ENCODE measurements at regions of chr1 and their contacts with region 1.

Region 1: DNA sequence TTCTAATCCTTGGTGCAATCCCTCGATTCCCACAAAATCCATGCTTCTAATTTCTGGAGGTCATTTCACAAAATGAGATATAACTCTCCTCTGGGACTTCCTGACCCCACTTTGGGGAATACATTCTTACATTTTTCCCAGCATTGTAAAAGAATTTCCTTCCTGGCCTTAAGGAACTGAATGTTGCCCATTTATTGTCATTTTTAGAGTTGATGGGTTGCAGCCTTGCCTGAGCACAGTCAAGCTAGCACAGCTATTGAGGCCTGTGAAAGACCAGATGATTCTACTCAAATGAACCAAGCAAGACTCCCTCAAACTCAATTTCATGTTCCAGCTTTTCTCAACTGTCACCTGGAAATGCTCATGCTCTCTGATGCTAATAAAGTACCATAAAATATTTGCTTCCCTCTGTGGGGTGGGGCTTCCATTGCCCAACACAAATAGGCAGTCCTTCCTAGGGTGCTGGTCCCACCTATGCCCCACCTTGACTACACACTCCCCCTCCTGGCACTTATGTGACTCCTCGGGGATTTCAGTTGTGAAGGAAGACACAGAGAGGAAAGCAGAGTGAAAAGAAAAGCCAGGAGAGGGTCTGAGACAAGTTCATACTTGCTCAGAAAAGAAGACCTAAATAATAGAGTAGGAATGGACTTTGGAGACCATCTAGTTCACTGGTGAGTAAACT is 24.0 kb upstream of the CDC7 start:
- DNase-seq: no peak
- ATAC-seq: no peak
- H3K4me3 ChIP-seq: no peak overlapping the region
- H3K27ac ChIP-seq: no peak overlapping the region
- H3K4me1 ChIP-seq: no peaks in the 10 kb centered on the region
- H3K27me3 ChIP-seq: peaks cover 2 to 6% of the 10 kb centered on the region in 2 experiments; a peak in 2 of 5 replicates
- CTCF ChIP-seq: no peak
- EP300 ChIP-seq: no peak
- POLR2A ChIP-seq: no peak
- RAD21 ChIP-seq: no peak

Region 2: DNA sequence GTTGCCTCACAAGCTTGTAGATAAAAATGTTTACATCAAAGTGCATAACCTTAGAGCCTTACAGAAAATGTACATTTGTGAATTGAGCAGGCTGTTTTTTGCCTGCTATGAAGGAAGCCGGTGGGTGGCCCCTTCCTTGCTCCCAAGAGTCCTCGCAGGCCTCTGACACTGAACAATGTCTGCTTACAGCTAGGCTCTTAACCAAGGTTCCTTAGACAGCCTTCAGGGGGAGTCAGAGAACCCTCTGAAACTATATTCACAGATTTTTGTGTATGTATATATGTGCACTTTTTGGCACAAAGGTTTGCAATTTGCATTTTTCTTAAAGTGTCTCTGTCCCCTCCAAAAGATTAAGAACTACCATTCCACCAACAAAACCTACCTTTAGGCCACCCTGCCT is 1042.2 kb before region 1 on chr1:
- CTCF ChIA-PET with region 1: no interaction called
- POLR2A ChIA-PET with region 1: no interaction called
- in situ Hi-C with region 1: loop called (anchors 10 kb)
- intact Hi-C with region 1: no loop called
- DNase-seq: peak in 2 of 4 experiments; percentile 10 to 11
- ATAC-seq: peak; percentile 81
- H3K4me3 ChIP-seq: no peak overlapping the region
- H3K27ac ChIP-seq: no peak overlapping the region
- H3K4me1 ChIP-seq: no peaks in the 10 kb centered on the region
- H3K27me3 ChIP-seq: no peaks in the 10 kb centered on the region
- CTCF ChIP-seq: peak; percentile 18 to 42 (median 19); a peak in 2 of 6 replicates
- EP300 ChIP-seq: no peak
- POLR2A ChIP-seq: no peak
- RAD21 ChIP-seq: no peak

Region 3: DNA sequence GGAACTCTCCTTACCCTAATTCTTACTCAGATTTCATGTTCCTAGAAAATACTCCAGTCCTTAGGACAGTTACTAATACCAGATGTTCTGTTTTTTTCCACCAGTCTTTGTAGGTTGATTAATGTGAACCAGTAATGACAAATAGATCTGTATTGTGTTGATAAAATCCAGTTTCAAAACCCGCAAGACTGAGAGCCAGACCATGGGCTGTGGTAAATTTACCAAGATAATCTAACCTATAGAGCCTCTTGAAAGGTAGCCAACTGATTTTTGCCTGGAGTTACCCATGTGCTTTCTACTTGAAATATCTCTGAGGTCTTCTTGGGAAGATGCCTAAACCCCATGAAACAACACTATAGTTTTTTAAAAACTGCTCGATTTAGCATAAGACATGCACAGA is 22.5 kb before region 1 on chr1:
- CTCF ChIA-PET with region 1: no interaction called
- POLR2A ChIA-PET with region 1: no interaction called
- in situ Hi-C with region 1: no loop called
- intact Hi-C with region 1: no loop called
- DNase-seq: no peak
- ATAC-seq: no peak
- H3K4me3 ChIP-seq: no peak overlapping the region
- H3K27ac ChIP-seq: no peak overlapping the region
- H3K4me1 ChIP-seq: no peaks in the 10 kb centered on the region
- H3K27me3 ChIP-seq: no peaks in the 10 kb centered on the region; a peak in 2 of 5 replicates
- CTCF ChIP-seq: no peak
- EP300 ChIP-seq: no peak
- POLR2A ChIP-seq: no peak
- RAD21 ChIP-seq: no peak